Activated CD8-positive, alpha-beta memory T cell treated with anti-CD3 and anti-CD28 coated beads, Interleukin-2, amount 10 ng/mL, durations not matched to agents 7 days and 5 days (primary cell): ENCODE measurements at regions of chr12 and their contacts with region 1.

Region 1: GRCh38 chr12:56189176-56189917 is at the start of gene SMARCC2:
- DNase-seq: peak; percentile 90
- ATAC-seq: peak; percentile 85
- H3K4me3 Mint-ChIP-seq: peak within 1 kb of the TSS; percentile 95
- H3K27ac Mint-ChIP-seq: peak within 1 kb of the TSS; percentile 97
- H3K4me1 Mint-ChIP-seq: peaks cover 46% of the 10 kb centered on the region
- H3K27me3 Mint-ChIP-seq: no peaks in the 10 kb centered on the region
- total RNA-seq, gene SMARCC2: 147 to 150 TPM

Region 2: DNA sequence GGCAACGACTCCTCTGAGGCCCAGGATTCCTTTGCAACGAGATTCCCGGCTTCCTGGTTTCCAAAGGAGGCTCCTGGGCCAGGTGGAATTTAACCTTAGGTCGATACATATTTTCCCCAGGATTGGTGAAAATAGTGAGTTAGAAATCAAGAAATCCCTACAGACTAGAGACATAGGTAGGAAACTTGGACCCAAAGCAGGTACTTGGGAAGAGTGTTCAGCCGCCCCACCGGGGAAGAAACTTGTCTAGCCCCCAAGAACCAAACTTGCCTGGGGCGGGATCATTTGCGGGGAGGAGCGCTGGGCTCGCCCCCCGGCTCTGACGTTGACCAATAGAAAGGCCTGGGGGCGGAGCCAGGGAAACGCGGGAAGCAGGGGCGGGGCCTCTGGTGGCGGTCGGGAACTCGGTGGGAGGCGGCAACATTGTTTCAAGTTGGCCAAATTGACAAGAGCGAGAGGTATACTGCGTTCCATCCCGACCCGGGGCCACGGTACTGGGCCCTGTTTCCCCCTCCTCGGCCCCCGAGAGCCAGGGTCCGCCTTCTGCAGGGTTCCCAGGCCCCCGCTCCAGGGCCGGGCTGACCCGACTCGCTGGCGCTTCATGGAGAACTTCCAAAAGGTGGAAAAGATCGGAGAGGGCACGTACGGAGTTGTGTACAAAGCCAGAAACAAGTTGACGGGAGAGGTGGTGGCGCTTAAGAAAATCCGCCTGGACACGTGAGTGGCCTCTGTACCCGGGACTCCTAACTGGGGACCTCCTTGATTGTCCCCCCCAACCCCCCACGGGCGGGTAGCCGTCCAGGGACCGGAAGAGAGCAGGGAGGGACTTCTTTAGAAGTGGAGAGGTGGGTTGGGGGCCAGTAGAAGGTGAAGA is 222.7 kb before region 1 on chr12 and contains the start of gene CDK2:
- CTCF ChIA-PET with region 1: no interaction called
- DNase-seq: peak; percentile 95
- ATAC-seq: peak; percentile 97
- H3K4me3 Mint-ChIP-seq: peak within 1 kb of the TSS; percentile 98
- H3K27ac Mint-ChIP-seq: peak within 1 kb of the TSS; percentile 83
- H3K4me1 Mint-ChIP-seq: peaks cover 40% of the 10 kb centered on the region
- H3K27me3 Mint-ChIP-seq: no peaks in the 10 kb centered on the region
- total RNA-seq, gene CDK2: 146 to 158 TPM

Region 3: GRCh38 chr12:55996715-55997534 is 192.4 kb before region 1 on chr12 and contains the start of gene SUOX:
- CTCF ChIA-PET with region 1: interaction called, 15 read pairs
- DNase-seq: peak; percentile 71
- ATAC-seq: peak; percentile 75
- H3K4me3 Mint-ChIP-seq: peak within 1 kb of the TSS; percentile 68
- H3K27ac Mint-ChIP-seq: peak within 1 kb of the TSS; percentile 48
- H3K4me1 Mint-ChIP-seq: peaks cover 37% of the 10 kb centered on the region
- H3K27me3 Mint-ChIP-seq: no peaks in the 10 kb centered on the region
- total RNA-seq, gene SUOX: 2.5 to 14.6 TPM

Region 4: DNA sequence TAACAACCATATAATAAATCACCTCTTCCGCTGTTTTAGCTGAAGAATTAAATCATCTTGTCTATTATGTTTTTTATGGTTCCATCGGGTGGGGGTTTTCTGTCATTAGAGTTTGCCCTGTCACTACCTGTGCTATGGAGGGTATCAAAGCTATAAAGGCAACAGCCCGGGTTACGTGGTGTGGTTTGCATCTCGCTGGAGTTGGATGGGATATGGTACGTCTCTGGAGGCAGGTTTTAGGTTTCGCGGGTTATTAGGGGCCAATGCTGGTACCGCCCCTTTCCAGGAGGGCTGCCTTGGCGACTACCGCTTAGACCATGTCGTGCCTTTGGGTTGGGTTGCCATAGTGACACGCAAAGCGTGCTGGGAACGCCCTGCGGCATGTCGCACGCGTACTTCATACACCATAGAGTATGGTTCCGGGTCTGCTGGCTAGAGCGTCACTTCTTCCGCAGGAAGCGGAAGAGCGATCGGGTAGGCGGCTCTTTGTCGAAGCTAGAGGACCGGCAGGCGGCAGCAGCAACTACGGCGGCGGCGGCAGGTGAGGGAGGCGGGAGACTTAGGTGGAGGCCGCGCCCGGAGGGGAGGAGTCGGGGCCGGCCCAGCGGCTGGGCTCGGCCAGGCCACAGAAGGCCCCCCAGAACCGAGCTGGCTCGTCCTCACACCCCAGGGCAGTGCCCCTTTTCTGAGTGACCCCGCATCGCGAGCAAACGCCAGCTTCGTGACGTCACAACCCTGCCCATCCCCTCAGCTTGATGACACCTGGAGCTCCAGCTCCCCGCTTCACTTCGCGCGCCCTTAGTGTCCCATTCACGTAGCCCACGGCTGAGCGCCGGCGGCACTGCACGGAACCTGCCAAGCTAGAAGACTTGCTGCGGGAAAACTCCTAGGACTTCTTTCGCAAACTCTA is 71.3 kb before region 1 on chr12 and contains the start of gene ZC3H10:
- CTCF ChIA-PET with region 1: interaction called, 154 read pairs
- DNase-seq: peak; percentile 100
- ATAC-seq: peak; percentile 79
- H3K4me3 Mint-ChIP-seq: peak within 1 kb of the TSS; percentile 98
- H3K27ac Mint-ChIP-seq: peak within 1 kb of the TSS; percentile 98
- H3K4me1 Mint-ChIP-seq: peaks cover 33% of the 10 kb centered on the region
- H3K27me3 Mint-ChIP-seq: no peaks in the 10 kb centered on the region
- total RNA-seq, gene ZC3H10: 10.3 to 11.7 TPM

Region 5: GRCh38 chr12:56152318-56153033 is 36.9 kb before region 1 on chr12 and contains the start of gene MYL6B:
- CTCF ChIA-PET with region 1: interaction called, 19 read pairs
- DNase-seq: peak; percentile 97
- ATAC-seq: peak; percentile 94
- H3K4me3 Mint-ChIP-seq: peak within 1 kb of the TSS; percentile 83
- H3K27ac Mint-ChIP-seq: peak within 1 kb of the TSS; percentile 100
- H3K4me1 Mint-ChIP-seq: peaks cover 43% of the 10 kb centered on the region
- H3K27me3 Mint-ChIP-seq: no peaks in the 10 kb centered on the region
- total RNA-seq, gene MYL6B: 67.6 to 85.2 TPM

Region 6: GRCh38 chr12:56206457-56207166 is 17.3 kb after region 1 on chr12:
- CTCF ChIA-PET with region 1: interaction called, 14 read pairs
- DNase-seq: peak; percentile 63
- ATAC-seq: peak; percentile 62
- H3K4me3 Mint-ChIP-seq: no peak overlapping the region
- H3K27ac Mint-ChIP-seq: no peak overlapping the region
- H3K4me1 Mint-ChIP-seq: no peaks in the 10 kb centered on the region
- H3K27me3 Mint-ChIP-seq: no peaks in the 10 kb centered on the region

Region 7: GRCh38 chr12:56266693-56267442 is 77.5 kb after region 1 on chr12 and contains the start of gene COQ10A:
- CTCF ChIA-PET with region 1: interaction called, 14 read pairs
- DNase-seq: peak; percentile 93
- ATAC-seq: peak; percentile 94
- H3K4me3 Mint-ChIP-seq: peak within 1 kb of the TSS; percentile 85
- H3K27ac Mint-ChIP-seq: peak within 1 kb of the TSS; percentile 89
- H3K4me1 Mint-ChIP-seq: peaks cover 19% of the 10 kb centered on the region
- H3K27me3 Mint-ChIP-seq: no peaks in the 10 kb centered on the region
- total RNA-seq, gene COQ10A: 16.0 to 17.4 TPM

Region 8: GRCh38 chr12:56299853-56300643 is 110.7 kb after region 1 on chr12 and contains the start of gene CS:
- CTCF ChIA-PET with region 1: no interaction called
- DNase-seq: peak; percentile 99
- ATAC-seq: peak; percentile 97
- H3K4me3 Mint-ChIP-seq: peak within 1 kb of the TSS; percentile 90
- H3K27ac Mint-ChIP-seq: peak within 1 kb of the TSS; percentile 89
- H3K4me1 Mint-ChIP-seq: peaks cover 49% of the 10 kb centered on the region
- H3K27me3 Mint-ChIP-seq: no peaks in the 10 kb centered on the region
- total RNA-seq, gene CS: 174 to 242 TPM